ENCODE measurements at regions of chr12 and their contacts with region 1.

Region 1: GRCh38 chr12:42484996-42485395 is 104.5 kb downstream of the PRICKLE1 start:
- DNase-seq: no peak
- H3K4me3 ChIP-seq: peak overlapping the region in 1 of 3 donors; percentile 89
- H3K27ac ChIP-seq: peak overlapping the region in 1 of 3 donors; percentile 99
- H3K4me1 ChIP-seq: peaks cover 14 to 16% of the 10 kb centered on the region in 2 donors
- H3K27me3 ChIP-seq: no peaks in the 10 kb centered on the region
- CTCF ChIP-seq: no peak
- POLR2A ChIP-seq: no peak

Region 2: DNA sequence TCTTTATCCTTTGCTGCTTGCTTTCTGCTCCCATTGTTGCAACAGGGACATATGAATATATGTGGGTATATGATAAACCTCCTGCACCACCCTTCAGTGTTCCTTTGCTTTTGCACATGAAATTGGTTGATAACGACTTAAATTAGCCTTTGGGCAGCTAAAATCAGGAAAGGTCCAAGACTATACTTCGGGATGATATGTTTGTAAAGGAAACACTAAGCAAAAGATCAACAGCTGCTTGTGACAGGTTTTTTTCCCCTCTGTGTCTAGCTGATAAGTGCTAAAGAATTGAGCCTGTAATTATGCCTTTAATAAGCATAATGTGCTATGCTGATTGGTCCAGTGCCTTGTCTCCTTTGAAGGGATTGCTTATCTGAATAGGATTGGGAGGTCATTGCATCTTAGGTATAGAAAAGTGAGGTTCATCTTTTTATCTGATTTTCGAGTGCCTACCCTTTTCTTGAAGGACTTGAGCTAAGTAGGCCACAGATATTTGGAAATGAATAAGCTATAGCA is 99.6 kb before region 1 on chr12:
- intact Hi-C with region 1: no loop called
- DNase-seq: no peak
- H3K4me3 ChIP-seq: no peak overlapping the region
- H3K27ac ChIP-seq: no peak overlapping the region
- H3K4me1 ChIP-seq: no peaks in the 10 kb centered on the region
- H3K27me3 ChIP-seq: no peaks in the 10 kb centered on the region
- CTCF ChIP-seq: no peak
- POLR2A ChIP-seq: no peak

Region 3: GRCh38 chr12:42568952-42569915 is 84.2 kb after region 1 on chr12:
- intact Hi-C with region 1: loop called (anchors 5 kb)
- DNase-seq: no peak
- H3K4me3 ChIP-seq: no peak overlapping the region
- H3K27ac ChIP-seq: no peak overlapping the region
- H3K4me1 ChIP-seq: no peaks in the 10 kb centered on the region
- H3K27me3 ChIP-seq: no peaks in the 10 kb centered on the region
- CTCF ChIP-seq: peak in 4 of 6 experiments; percentile 31 to 71 (median 66)
- POLR2A ChIP-seq: no peak

Measured in thyroid gland (tissue), 4 donors.